ENCODE measurements at regions of chr12 and their contacts with region 1.

Region 1: GRCh38 chr12:45543906-45544315 is 185.6 kb upstream of the ARID2 start:
- DNase-seq: peak; percentile 58 to 70 (median 64)
- H3K4me3 ChIP-seq: no peak overlapping the region
- H3K4me3 Mint-ChIP-seq: no peak overlapping the region
- H3K27ac ChIP-seq: no peak overlapping the region
- H3K27ac Mint-ChIP-seq: no peak overlapping the region
- H3K4me1 ChIP-seq: no peaks in the 10 kb centered on the region
- H3K4me1 Mint-ChIP-seq: peaks cover 0 to 6% (median 2%) of the 10 kb centered on the region in 4 donors
- H3K27me3 ChIP-seq: no peaks in the 10 kb centered on the region
- H3K27me3 Mint-ChIP-seq: peaks cover 0 to 1% of the 10 kb centered on the region in 2 donors

Region 2: DNA sequence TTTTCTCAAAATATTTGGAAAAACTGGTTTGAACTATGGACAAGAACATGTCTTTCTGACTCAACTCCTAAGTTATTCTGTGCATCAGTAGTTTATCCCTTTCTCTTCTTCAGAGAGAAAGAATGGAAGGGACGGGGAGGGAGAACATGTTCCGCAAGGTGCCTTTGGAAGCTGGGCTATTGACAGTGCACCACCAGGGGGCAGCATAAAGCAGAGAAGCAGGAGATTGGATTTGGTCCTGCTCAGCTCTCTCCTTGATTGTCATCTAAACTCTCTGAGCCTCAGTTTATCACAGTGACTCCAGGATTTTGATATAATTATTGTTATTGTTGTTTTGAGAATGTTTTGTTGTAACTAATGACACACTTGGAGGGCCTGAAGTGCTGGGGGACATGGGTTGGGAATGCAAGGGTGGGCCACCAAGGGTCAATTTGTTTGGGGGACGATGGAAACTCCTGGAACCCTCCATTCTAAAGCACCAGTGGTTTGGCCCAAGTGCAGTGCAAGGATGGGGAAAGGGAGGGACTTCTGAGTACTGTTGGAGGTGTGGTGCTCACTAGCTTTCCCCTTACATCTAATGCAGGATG is 373.4 kb before region 1 on chr12:
- CTCF ChIA-PET with region 1: no interaction called
- POLR2A ChIA-PET with region 1: no interaction called
- intact Hi-C with region 1: loop called (anchors 1 kb)
- DNase-seq: peak; percentile 58 to 66 (median 63)
- H3K4me3 ChIP-seq: no peak overlapping the region
- H3K4me3 Mint-ChIP-seq: no peak overlapping the region
- H3K27ac ChIP-seq: no peak overlapping the region
- H3K27ac Mint-ChIP-seq: peak overlapping the region in 1 of 7 donors; percentile 7
- H3K4me1 ChIP-seq: no peaks in the 10 kb centered on the region
- H3K4me1 Mint-ChIP-seq: no peaks in the 10 kb centered on the region
- H3K27me3 ChIP-seq: no peaks in the 10 kb centered on the region
- H3K27me3 Mint-ChIP-seq: peaks cover 0 to 1% of the 10 kb centered on the region in 2 donors

Region 3: GRCh38 chr12:45557016-45557415 is 13.1 kb after region 1 on chr12:
- CTCF ChIA-PET with region 1: interaction called, 15 read pairs
- POLR2A ChIA-PET with region 1: no interaction called
- intact Hi-C with region 1: no loop called
- DNase-seq: no peak
- H3K4me3 ChIP-seq: no peak overlapping the region
- H3K4me3 Mint-ChIP-seq: no peak overlapping the region
- H3K27ac ChIP-seq: no peak overlapping the region
- H3K27ac Mint-ChIP-seq: no peak overlapping the region
- H3K4me1 ChIP-seq: no peaks in the 10 kb centered on the region
- H3K4me1 Mint-ChIP-seq: peaks cover 0 to 2% (median 0%) of the 10 kb centered on the region in 4 donors
- H3K27me3 ChIP-seq: no peaks in the 10 kb centered on the region
- H3K27me3 Mint-ChIP-seq: peaks cover 0 to 3% of the 10 kb centered on the region in 2 donors

Region 4: DNA sequence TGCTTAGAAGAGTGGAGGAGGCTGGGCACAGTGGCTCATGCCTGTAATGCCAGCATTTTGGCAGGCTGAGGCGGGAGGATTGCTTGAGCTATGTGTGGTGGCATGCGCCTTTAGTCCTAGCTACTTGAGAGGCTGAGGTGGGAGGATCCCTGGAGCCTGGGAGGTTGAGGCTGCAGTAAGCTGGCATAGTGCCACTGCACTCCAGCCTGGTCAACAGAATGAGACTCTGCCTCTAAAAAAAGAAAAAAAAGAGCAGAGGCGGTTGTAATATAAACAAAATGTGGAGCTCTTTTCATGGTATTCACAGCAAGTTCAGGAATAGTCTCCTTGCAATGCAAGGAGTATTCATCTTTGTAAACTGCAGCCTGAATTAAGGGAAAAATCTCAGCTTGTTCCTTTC is 212.8 kb after region 1 on chr12:
- CTCF ChIA-PET with region 1: interaction called, 10 read pairs
- POLR2A ChIA-PET with region 1: no interaction called
- intact Hi-C with region 1: no loop called
- DNase-seq: no peak
- H3K4me3 ChIP-seq: no peak overlapping the region
- H3K4me3 Mint-ChIP-seq: no peak overlapping the region
- H3K27ac ChIP-seq: no peak overlapping the region
- H3K27ac Mint-ChIP-seq: peak overlapping the region in 3 of 7 donors; percentile 4 to 39 (median 8)
- H3K4me1 ChIP-seq: peaks cover 24% of the 10 kb centered on the region
- H3K4me1 Mint-ChIP-seq: peaks cover 38 to 81% (median 61%) of the 10 kb centered on the region in 4 donors
- H3K27me3 ChIP-seq: no peaks in the 10 kb centered on the region
- H3K27me3 Mint-ChIP-seq: no peaks in the 10 kb centered on the region

Region 5: DNA sequence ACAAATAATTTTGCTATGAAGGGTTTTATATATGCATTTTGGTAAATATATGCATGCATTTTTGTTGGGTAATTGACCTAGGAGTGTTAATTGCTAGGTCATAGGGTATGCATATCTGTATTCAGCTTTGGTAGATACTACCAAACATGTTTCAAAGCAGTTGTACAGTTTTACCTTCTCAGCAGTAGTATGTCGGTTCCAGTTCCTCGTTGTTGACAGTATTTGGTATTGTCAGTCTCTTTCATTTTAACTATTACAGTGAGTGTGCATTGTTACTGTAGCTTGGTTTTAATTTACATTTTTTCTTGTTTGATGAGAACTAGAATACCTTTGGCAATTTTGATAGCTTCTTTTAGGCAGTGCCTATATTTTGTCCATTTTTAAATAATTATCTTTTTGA is 284.5 kb after region 1 on chr12:
- CTCF ChIA-PET with region 1: interaction called, 4 read pairs
- POLR2A ChIA-PET with region 1: no interaction called
- intact Hi-C with region 1: loop called (anchors 5 kb)
- DNase-seq: no peak
- H3K4me3 ChIP-seq: no peak overlapping the region
- H3K4me3 Mint-ChIP-seq: no peak overlapping the region
- H3K27ac ChIP-seq: no peak overlapping the region
- H3K27ac Mint-ChIP-seq: peak overlapping the region in 1 of 7 donors; percentile 13
- H3K4me1 ChIP-seq: no peaks in the 10 kb centered on the region
- H3K4me1 Mint-ChIP-seq: peaks cover 3 to 8% (median 5%) of the 10 kb centered on the region in 4 donors
- H3K27me3 ChIP-seq: no peaks in the 10 kb centered on the region
- H3K27me3 Mint-ChIP-seq: no peaks in the 10 kb centered on the region

Measured in CD4-positive, alpha-beta memory T cell (primary cell).